IMR-90 (cell line): ENCODE measurements at regions of chr15 and their contacts with region 1.

Region 1: GRCh38 chr15:60179786-60180391 is 175.8 kb downstream of the FOXB1 start:
- DNase-seq: peak; percentile 61
- ATAC-seq: peak; percentile 92
- H3K4me3 ChIP-seq: no peak overlapping the region
- H3K27ac ChIP-seq: no peak overlapping the region
- H3K4me1 ChIP-seq: no peaks in the 10 kb centered on the region
- H3K27me3 ChIP-seq: no peaks in the 10 kb centered on the region; the same call in none of the 2 replicates
- CTCF ChIP-seq: peak; percentile 83
- POLR2A ChIP-seq: no peak
- RAD21 ChIP-seq: peak; percentile 71

Region 2: DNA sequence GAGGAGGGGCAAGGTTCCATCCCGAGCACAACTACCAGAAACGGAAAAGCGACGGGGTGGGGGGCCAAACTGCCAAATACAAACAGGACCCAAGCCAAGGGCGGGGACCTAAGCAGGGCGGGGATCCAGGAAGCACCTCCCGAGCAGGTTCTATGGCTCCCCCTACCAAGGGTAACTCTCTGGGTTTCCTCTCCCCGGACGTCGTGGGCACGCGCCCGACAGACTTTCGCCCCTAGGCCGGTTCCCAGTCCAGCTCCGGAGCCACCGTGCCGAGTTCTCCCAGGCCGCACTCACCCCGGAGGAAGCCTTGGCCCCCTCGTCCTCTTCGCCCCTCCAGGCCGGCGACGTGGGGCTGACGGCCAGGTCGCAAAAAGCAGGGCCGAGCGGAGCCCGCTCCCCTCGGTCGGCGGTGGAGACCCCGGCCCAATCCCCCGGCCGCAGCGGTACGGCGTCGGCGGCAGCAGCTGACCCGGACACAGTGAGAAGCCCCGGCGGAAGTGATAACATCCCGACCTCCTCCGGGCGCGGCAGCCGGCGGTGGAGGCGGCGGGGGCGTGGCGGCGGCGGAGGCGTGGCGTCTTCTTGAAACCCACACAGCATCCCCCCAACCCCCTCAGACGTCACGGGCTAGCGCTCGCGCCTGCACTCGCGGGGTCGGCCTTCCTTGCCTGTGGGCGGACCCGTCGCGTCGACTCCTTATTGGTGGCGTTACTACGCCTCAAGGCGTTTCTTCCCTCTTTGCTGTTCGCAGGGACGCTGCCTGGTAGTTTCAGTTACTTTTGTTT is 490.9 kb before region 1 on chr15 and contains the start of gene BNIP2:
- CTCF ChIA-PET with region 1: interaction called, 5 read pairs
- POLR2A ChIA-PET with region 1: no interaction called
- dilution Hi-C with region 1: no loop called
- in situ Hi-C with region 1: no loop called
- intact Hi-C with region 1: loop called (anchors 1 kb)
- DNase-seq: peak; percentile 98
- ATAC-seq: peak; percentile 96
- H3K4me3 ChIP-seq: peak within 1 kb of the TSS; percentile 86
- H3K27ac ChIP-seq: peak within 1 kb of the TSS; percentile 88
- H3K4me1 ChIP-seq: peaks cover 5% of the 10 kb centered on the region
- H3K27me3 ChIP-seq: no peaks in the 10 kb centered on the region
- CTCF ChIP-seq: no peak
- POLR2A ChIP-seq: peak; percentile 84
- RAD21 ChIP-seq: no peak
- total RNA-seq, gene BNIP2: 47.3 and 108 TPM in 2 replicates

Region 3: DNA sequence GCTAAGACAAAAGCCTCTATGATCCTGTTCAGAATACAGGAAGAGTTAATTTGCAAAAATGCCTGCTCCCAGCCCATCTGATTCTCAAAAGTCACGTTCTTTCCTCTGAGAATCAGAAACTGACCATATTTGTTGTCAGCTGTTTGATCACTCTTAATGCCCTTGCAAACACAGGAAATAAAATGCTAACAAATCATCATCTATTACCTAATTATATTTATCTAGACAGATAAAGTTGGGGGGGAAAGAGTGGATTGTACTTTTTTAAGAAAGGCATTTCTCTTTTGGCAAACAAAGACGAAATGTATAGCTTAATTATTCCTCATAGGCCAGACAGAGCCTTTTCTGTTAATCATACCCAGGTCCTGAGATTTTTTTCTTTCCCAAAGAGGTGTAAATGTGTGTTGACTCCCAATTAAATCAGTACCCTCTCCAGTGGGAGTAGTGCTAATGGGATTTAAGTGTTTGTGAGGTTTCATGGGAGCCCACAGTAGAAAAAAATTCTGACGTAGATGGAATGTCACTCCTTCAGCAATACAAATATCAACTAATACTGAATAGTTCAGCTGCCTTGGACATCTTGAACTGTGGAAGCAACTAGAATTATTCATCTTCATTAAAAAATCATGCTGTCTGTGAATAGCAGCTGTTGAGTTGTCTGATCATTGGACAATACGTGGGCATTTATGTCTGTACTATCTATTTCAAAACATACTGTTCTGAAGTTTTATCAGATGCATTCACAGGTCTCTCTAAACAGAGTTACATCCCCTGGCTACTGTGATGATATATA is 468.2 kb before region 1 on chr15:
- CTCF ChIA-PET with region 1: no interaction called
- POLR2A ChIA-PET with region 1: no interaction called
- dilution Hi-C with region 1: no loop called
- in situ Hi-C with region 1: loop called (anchors 10 kb)
- intact Hi-C with region 1: no loop called
- DNase-seq: no peak
- ATAC-seq: no peak
- H3K4me3 ChIP-seq: no peak overlapping the region
- H3K27ac ChIP-seq: no peak overlapping the region
- H3K4me1 ChIP-seq: no peaks in the 10 kb centered on the region
- H3K27me3 ChIP-seq: no peaks in the 10 kb centered on the region; the same call in 1 of the 2 replicates
- CTCF ChIP-seq: no peak
- POLR2A ChIP-seq: no peak
- RAD21 ChIP-seq: no peak

Region 4: GRCh38 chr15:59725172-59725486 is 454.8 kb before region 1 on chr15:
- CTCF ChIA-PET with region 1: interaction called, 6 read pairs
- POLR2A ChIA-PET with region 1: no interaction called
- dilution Hi-C with region 1: no loop called
- in situ Hi-C with region 1: no loop called
- intact Hi-C with region 1: loop called (anchors 1 kb)
- DNase-seq: no peak
- ATAC-seq: no peak
- H3K4me3 ChIP-seq: no peak overlapping the region
- H3K27ac ChIP-seq: no peak overlapping the region
- H3K4me1 ChIP-seq: no peaks in the 10 kb centered on the region
- H3K27me3 ChIP-seq: peaks cover 24% of the 10 kb centered on the region
- CTCF ChIP-seq: no peak
- POLR2A ChIP-seq: no peak
- RAD21 ChIP-seq: no peak

Region 5: DNA sequence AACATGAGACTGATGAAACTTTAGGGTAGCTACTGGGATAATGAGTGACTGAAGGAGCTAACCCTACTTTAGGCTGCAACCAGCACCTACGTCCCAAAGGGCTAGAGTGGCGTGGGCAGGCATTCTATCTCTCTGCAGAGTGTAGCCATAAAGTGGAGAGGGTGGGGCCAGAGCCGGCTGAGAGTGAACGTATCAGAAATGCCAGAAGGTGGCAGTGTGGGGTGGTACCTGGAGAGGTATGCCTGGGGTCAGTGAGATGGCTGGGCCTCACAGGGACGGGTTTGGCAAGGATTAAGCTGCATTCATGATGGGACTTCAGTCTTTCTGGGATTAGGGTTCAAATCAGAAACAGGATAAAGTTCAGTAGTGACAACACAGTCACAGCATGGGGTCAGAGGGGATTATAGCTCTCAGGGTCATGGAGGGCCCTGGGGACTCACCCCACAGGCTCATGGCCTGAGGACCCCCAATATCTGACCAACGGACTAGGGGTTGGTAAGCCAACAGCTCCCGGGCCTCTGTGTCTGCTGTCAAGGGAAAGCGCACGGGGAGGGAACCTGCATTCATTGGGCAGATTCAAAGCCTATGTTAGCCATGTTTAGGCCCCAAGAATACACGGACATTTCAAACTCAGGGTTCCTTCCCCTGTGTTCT is 262.3 kb before region 1 on chr15:
- CTCF ChIA-PET with region 1: interaction called, 5 read pairs
- POLR2A ChIA-PET with region 1: no interaction called
- dilution Hi-C with region 1: no loop called
- in situ Hi-C with region 1: no loop called
- intact Hi-C with region 1: loop called (anchors 1 kb)
- DNase-seq: peak; percentile 10
- ATAC-seq: peak; percentile 83
- H3K4me3 ChIP-seq: no peak overlapping the region
- H3K27ac ChIP-seq: no peak overlapping the region
- H3K4me1 ChIP-seq: no peaks in the 10 kb centered on the region
- H3K27me3 ChIP-seq: no peaks in the 10 kb centered on the region
- CTCF ChIP-seq: peak; percentile 36
- POLR2A ChIP-seq: no peak
- RAD21 ChIP-seq: peak; percentile 45